ENCODE measurements at regions of chr5 and their contacts with region 1.

Region 1: GRCh38 chr5:56270568-56271392 is 37.6 kb upstream of the ANKRD55 start:
- DNase-seq: peak; percentile 84
- ATAC-seq: peak; percentile 99
- H3K4me3 Mint-ChIP-seq: no peak overlapping the region
- H3K27ac Mint-ChIP-seq: no peak overlapping the region
- H3K4me1 Mint-ChIP-seq: peaks cover 7% of the 10 kb centered on the region
- H3K27me3 Mint-ChIP-seq: no peaks in the 10 kb centered on the region
- CTCF ChIP-seq: peak; percentile 94

Region 2: DNA sequence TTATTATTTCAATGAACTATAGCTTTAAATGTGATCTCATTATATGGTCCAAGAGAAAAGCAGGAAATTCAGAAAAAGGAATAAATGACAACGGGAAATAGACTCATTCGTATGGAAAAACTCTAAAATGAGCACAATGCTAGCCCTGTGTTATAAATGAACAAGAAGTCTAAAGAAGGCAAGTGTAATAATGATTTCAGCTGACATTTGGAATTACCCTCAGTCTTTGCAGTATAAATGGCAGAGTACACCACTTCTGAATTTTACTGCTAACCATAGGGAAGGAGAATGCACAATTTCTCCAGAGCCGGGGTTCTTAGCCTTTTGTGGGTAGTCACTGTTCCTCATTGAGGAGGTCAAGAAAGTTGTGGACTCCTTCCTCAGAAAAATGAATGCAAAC is 130.7 kb before region 1 on chr5:
- CTCF ChIA-PET with region 1: no interaction called
- POLR2A ChIA-PET with region 1: no interaction called
- DNase-seq: no peak
- ATAC-seq: no peak
- H3K4me3 Mint-ChIP-seq: no peak overlapping the region
- H3K27ac Mint-ChIP-seq: no peak overlapping the region
- H3K4me1 Mint-ChIP-seq: no peaks in the 10 kb centered on the region
- H3K27me3 Mint-ChIP-seq: no peaks in the 10 kb centered on the region
- CTCF ChIP-seq: no peak

Region 3: GRCh38 chr5:56297851-56298250 is 27.1 kb after region 1 on chr5:
- CTCF ChIA-PET with region 1: no interaction called
- POLR2A ChIA-PET with region 1: no interaction called
- DNase-seq: no peak
- ATAC-seq: no peak
- H3K4me3 Mint-ChIP-seq: no peak overlapping the region
- H3K27ac Mint-ChIP-seq: no peak overlapping the region
- H3K4me1 Mint-ChIP-seq: no peaks in the 10 kb centered on the region
- H3K27me3 Mint-ChIP-seq: no peaks in the 10 kb centered on the region
- CTCF ChIP-seq: no peak

Region 4: DNA sequence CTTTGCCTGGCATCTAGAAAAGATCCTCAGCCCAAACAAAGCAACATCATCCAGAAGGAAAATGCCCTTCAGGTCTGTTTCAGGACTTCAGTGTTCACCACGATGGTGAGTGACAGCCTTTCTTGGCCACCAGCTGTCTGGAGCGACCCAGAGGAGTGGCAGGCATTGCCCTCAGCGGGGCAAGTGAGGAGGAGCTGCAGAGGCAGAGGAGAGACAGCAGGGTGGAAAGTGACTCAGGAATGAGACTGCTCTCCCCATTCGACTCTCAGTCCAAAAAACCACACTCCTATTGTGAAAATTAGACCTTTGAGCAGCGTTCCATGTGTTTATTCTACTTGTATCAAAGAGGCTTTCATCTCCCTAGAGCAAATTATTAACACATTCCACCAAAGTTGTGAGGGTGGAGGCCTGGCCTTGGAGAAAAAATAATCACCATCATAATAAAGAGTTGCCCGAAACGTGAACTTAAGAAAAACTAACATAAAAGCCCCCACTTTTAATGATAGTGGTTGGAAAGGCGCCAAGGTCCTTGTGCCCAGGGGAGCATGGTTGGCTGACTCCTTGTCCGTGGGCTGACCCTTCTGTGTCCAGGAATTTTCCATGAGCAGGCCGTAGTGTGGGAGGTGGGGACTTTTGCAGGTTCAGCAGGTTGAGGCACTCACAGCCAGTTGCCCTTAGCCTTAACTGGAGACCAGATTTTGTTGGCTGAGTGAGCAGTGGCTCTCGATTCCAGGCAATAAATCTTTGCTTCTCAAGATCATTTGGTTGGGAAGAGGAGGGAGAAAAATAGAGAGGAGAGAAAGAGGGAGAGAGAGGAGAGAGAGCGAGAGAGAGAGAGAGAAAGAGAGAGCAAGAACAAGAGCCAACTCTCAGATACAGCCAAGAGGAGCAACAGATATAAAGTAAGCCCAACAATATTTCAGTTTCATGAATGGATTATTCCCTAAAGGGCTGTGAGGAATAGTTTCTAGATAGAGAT is 88.2 kb after region 1 on chr5:
- CTCF ChIA-PET with region 1: no interaction called
- POLR2A ChIA-PET with region 1: no interaction called
- DNase-seq: no peak
- ATAC-seq: no peak
- H3K4me3 Mint-ChIP-seq: no peak overlapping the region
- H3K27ac Mint-ChIP-seq: no peak overlapping the region
- H3K4me1 Mint-ChIP-seq: peaks cover 17% of the 10 kb centered on the region
- H3K27me3 Mint-ChIP-seq: no peaks in the 10 kb centered on the region; the same call in 1 of the 2 replicates
- CTCF ChIP-seq: no peak

Region 5: DNA sequence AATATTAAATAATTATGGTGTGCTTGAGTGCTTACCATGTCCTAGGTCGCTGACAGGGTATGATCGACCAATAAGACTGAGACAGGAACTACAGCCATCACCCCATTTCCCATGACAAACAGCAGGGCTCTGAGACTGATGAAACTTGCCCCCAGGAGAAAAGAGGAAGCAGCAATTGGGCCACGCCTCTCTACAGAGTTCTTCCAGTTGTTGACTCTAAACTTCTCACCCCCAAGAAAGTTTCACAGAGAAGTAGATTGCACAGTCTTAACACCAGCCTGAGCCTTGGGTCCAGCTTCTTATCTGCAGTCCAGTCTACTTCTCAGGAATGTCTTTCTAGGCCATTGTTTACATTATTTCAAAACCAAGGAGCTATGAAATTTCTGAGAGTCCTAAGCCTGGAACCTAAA is 144.6 kb after region 1 on chr5:
- CTCF ChIA-PET with region 1: no interaction called
- POLR2A ChIA-PET with region 1: no interaction called
- DNase-seq: no peak
- ATAC-seq: no peak
- H3K4me3 Mint-ChIP-seq: no peak overlapping the region
- H3K27ac Mint-ChIP-seq: 0 out of 2 replicates have a peak overlapping the region, but pooled peaks have one; percentile 11
- H3K4me1 Mint-ChIP-seq: peaks cover 6% of the 10 kb centered on the region
- H3K27me3 Mint-ChIP-seq: no peaks in the 10 kb centered on the region
- CTCF ChIP-seq: no peak

Region 6: GRCh38 chr5:56480705-56481427 is 210.1 kb after region 1 on chr5:
- CTCF ChIA-PET with region 1: interaction called, 10 read pairs
- POLR2A ChIA-PET with region 1: no interaction called
- DNase-seq: peak; percentile 56
- ATAC-seq: peak; percentile 54
- H3K4me3 Mint-ChIP-seq: peak overlapping the region; percentile 77
- H3K27ac Mint-ChIP-seq: no peak overlapping the region
- H3K4me1 Mint-ChIP-seq: peaks cover 24% of the 10 kb centered on the region
- H3K27me3 Mint-ChIP-seq: peaks cover 45% of the 10 kb centered on the region
- CTCF ChIP-seq: no peak

Region 7: DNA sequence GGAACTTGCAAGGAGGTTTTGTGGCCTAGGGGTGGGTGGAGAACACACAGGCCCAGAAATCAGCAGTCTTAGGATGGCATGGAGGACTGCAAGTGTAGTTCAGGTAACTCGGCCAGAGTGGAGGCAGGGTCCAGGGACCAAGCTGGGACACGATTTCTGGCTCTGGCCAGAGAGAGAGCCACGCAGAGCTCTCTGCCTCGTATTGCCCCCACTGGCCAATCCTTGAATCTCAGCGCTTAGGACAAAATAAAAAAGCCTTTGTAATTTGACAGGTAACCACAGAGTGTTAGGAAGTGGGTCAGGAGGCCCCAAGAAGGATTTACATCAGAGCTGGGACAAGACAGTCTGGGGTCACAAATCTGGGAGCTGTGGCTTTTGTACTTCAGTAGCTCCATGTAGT is 556.3 kb after region 1 on chr5:
- CTCF ChIA-PET with region 1: interaction called, 13 read pairs
- POLR2A ChIA-PET with region 1: no interaction called
- DNase-seq: peak; percentile 41
- ATAC-seq: peak; percentile 88
- H3K4me3 Mint-ChIP-seq: no peak overlapping the region
- H3K27ac Mint-ChIP-seq: 0 out of 2 replicates have a peak overlapping the region, but pooled peaks have one; percentile 5
- H3K4me1 Mint-ChIP-seq: peaks cover 78% of the 10 kb centered on the region
- H3K27me3 Mint-ChIP-seq: no peaks in the 10 kb centered on the region
- CTCF ChIP-seq: no peak

Region 8: DNA sequence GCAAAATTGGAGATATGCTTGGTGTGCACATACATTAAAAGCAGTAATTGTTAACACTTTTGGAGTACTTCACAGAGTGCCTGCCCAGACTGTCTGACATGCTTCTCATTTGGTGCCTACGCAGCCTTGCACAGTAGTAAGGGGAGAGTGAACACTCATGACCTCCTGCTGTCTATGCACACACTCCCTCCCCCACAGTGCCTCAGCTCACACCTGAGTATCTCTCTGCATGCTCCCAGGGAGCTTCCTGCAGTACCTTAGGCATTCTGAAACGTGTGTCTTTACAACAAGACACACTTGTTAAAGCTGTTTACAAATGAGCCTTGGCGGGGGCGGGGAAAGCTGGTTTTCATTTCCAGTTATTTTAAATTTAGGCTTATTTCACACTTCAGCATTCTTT is 562.5 kb after region 1 on chr5:
- CTCF ChIA-PET with region 1: interaction called, 94 read pairs
- POLR2A ChIA-PET with region 1: interaction called, 4 read pairs
- DNase-seq: peak; percentile 32
- ATAC-seq: peak; percentile 80
- H3K4me3 Mint-ChIP-seq: no peak overlapping the region
- H3K27ac Mint-ChIP-seq: peak overlapping the region; percentile 69; the same call in 1 of the 2 replicates
- H3K4me1 Mint-ChIP-seq: peaks cover 91% of the 10 kb centered on the region
- H3K27me3 Mint-ChIP-seq: no peaks in the 10 kb centered on the region
- CTCF ChIP-seq: no peak

Measured in WTC11 (cell line).